OCI-LY7 (cell line): ENCODE measurements at regions of chr3 and their contacts with region 1.

Region 1: DNA sequence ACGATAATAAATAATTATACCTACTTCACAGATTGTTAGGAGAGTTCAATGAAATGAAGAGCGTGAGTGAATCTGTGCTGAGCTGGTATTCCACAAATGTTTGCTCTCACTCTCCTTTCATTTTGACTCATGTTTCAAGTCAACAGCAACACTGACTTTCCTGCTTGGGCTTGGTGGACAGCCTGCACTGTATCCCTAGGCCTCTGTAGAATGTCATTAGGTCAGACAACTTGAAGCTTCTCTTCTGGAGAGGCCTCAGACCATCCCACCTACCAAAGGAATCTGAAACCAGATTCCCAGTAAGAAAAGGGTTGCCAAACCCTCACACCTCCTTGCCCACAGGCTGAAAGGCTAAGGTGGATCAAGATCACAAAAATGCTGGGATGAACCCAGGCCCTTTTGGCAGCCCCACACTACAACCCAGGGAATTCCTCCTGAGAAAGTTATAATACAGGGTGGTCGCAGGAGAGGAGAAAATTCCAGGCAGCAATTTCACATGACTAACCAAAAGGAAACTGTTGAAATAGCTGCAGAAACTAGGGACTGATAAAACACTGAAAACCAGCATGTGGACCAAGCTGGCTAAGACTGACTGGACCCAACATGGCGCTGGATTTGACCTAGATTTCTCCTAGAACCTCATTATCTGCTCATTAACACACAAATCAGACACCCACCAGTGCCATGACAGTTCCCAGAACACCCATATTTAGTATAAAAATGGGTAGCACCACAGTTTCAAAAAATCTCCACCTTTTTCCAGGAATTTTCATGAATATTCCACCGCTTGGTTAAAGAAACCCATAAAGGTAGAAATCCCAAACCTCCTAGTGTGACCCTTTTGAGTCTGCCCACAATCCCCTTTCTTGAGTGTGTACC is 57.0 kb upstream of the ZNF148 start:
- DNase-seq: no peak
- H3K4me3 ChIP-seq: no peak overlapping the region
- H3K27ac ChIP-seq: no peak overlapping the region
- H3K4me1 ChIP-seq: no peaks in the 10 kb centered on the region
- CTCF ChIP-seq: no peak

Region 2: GRCh38 chr3:125150525-125151441 is 281.4 kb before region 1 on chr3:
- CTCF ChIA-PET with region 1: no interaction called
- POLR2A ChIA-PET with region 1: no interaction called
- intact Hi-C with region 1: loop called (anchors 5 kb)
- DNase-seq: peak; percentile 68
- H3K4me3 ChIP-seq: no peak overlapping the region
- H3K27ac ChIP-seq: no peak overlapping the region
- H3K4me1 ChIP-seq: peaks cover 6% of the 10 kb centered on the region
- CTCF ChIP-seq: peak; percentile 86